HEK293T (cell line): ENCODE measurements at regions of chr1 and their contacts with region 1.

Region 1: GRCh38 chr1:1351511-1352427 is 2.6 kb upstream of the DVL1 start:
- DNase-seq: no peak

Region 2: DNA sequence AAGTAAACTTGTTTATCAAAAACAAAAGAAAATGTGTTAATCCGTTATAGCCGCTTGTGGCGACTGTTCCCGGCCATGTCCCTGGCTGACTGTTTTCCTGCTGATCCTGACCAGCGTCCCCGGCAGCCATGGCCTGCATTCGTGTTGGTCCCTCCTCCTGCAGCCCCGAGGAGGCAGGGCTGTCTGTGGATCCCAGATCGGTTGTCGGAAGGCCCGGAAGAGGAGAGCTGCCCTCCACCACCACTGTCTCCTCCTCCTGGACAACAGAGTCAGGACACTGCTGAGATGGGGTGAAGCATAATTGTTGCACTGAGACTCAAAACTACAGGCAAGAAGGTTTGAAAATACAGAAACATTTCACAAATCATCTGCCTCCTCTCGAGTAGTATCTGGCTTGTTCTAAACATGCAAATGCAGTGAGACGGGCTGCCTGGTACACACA is 10.2 kb after region 1 on chr1:
- CTCF ChIA-PET with region 1: no interaction called
- POLR2A ChIA-PET with region 1: no interaction called
- DNase-seq: no peak

Region 3: GRCh38 chr1:1374929-1375662 is 23.3 kb after region 1 on chr1 and contains the start of gene AURKAIP1:
- CTCF ChIA-PET with region 1: interaction called, 3 read pairs
- POLR2A ChIA-PET with region 1: interaction called, 28 read pairs
- DNase-seq: peak; percentile 98